H1 (cell line): ENCODE measurements at regions of chr6 and their contacts with region 1.

Region 1: DNA sequence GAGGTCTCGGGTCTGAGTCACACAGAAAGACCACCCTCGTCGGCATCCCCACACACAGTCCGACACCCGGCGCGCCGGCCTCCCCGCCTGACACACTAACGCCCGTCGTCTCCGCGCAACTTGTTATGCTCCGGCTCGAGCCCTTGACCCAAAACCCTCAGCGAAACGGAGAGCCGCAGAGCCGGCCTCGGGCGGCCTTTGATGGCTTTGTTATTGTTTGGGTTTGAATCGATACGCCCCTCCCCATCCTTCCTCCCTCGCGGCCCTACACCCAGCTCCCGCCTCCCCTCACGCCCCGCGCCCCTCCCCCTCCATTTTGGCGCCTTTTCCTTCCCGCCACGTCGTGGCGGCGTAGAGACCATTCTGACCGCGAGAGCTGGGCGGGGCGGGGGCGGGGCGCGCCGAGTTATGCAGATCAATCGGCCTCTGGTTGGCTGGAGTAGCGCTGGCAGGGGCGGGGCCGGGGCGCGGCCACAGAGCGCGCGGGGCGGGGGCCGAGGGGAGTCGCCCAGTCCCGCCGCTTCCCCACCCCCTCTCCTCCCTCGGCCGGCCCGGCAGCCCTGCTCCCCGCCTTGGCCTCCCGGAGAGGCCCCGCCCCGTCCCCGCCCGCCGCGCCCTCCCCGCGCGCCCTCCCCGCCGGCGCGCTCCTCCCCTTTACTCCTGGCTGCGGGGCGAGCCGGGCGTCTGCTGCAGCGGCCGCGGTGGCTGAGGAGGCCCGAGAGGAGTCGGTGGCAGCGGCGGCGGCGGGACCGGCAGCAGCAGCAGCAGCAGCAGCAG is at the start of gene PIM1:
- DNase-seq: peak; percentile 92 to 93
- H3K4me3 ChIP-seq: peak within 1 kb of the TSS; percentile 92 to 99 (median 94)
- H3K27ac ChIP-seq: peak within 1 kb of the TSS; percentile 97
- H3K4me1 ChIP-seq: peaks cover 6 to 14% (median 10%) of the 10 kb centered on the region in 4 experiments; a peak in 5 of 7 replicates
- H3K27me3 ChIP-seq: no peaks in the 10 kb centered on the region
- CTCF ChIP-seq: no peak
- EP300 ChIP-seq: peak in 1 of 2 experiments; percentile 54; a peak in 1 of 3 replicates
- POLR2A ChIP-seq: peak in 1 of 2 experiments; percentile 65
- RAD21 ChIP-seq: no peak
- total RNA-seq, gene PIM1: 94.1 and 94.9 TPM in 2 replicates

Region 2: GRCh38 chr6:35327349-35328027 is 1842.2 kb before region 1 on chr6:
- CTCF ChIA-PET with region 1: no interaction called
- POLR2A ChIA-PET with region 1: no interaction called
- DNase-seq: peak in 1 of 2 experiments; percentile 79
- H3K4me3 ChIP-seq: no peak overlapping the region
- H3K27ac ChIP-seq: no peak overlapping the region
- H3K4me1 ChIP-seq: 0 out of 7 replicates have a peak, but pooled peaks cover 0 to under 1% (median 0%) of the 10 kb centered on the region in 4 experiments
- H3K27me3 ChIP-seq: no peaks in the 10 kb centered on the region
- CTCF ChIP-seq: peak; percentile 51 to 84 (median 74)
- EP300 ChIP-seq: no peak
- POLR2A ChIP-seq: no peak
- RAD21 ChIP-seq: peak; percentile 62 to 76

Region 3: DNA sequence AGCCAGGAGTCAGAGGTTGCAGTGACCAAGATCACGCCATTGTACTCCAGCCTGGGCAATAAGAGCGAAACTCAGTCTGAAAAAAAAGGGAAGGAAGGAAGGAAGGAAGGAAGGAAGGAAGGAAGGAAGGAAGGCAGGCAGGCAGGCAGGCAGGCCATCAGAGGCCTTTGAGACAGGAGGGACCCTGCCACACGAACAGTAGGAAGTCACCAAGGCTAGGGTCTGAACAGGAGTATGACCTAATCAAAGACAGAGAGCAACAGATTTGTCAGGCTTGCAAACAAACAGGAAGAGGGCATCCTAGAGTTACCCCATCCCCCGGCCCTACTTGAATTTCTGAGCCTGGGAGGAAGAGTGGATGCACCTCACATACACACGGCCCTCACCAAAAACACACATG is 97.2 kb before region 1 on chr6:
- CTCF ChIA-PET with region 1: interaction called, 9 read pairs
- POLR2A ChIA-PET with region 1: interaction called, 14 read pairs
- DNase-seq: no peak
- H3K4me3 ChIP-seq: no peak overlapping the region
- H3K27ac ChIP-seq: no peak overlapping the region
- H3K4me1 ChIP-seq: peaks cover 4 to 14% (median 11%) of the 10 kb centered on the region in 4 experiments
- H3K27me3 ChIP-seq: no peaks in the 10 kb centered on the region
- CTCF ChIP-seq: no peak
- EP300 ChIP-seq: no peak
- POLR2A ChIP-seq: no peak
- RAD21 ChIP-seq: no peak; a peak in 1 of 4 replicates

Region 4: DNA sequence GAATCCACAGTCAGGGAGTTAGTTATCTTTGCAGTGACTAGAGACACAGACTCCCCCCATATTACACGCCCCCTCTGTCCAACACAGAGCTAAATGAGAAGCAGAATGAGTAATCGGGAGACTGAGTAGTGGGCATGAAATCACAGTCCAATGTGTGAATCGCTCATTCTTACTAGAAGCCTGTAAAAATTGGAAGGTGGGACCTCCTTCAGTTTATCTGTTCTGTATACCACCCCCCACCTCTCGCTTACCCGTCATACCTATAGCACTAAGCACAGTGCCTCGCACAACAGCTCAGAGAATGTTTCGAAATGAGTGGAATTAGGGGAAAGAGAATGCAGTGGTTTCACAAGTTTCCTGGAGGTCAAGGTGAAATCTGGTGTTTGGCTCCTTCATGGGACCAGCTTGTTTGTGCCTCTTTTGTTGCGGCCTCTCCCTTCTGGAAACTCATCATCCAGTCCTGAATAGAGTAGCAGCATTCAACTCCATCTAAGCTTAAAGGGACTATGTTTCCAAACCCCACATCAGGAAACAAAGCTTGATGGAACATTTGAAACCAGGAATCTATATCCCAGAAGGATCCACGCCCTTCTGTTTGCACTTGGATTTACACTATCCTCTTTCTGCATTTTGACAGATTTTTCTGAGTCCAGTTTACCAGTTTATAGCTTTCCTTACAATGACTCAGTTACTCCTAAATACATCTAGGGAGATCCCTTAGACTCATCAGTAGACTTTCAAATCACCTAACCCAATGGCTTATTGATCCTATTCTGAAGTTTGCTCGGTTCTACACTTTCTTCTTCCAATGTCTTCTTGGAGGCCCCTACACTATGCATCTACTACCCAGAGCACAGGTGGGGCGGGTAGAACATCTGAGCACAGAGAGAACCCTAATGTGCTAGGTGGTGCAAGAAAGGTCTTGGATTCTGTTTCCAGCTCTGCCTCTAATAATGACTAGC is 58.9 kb before region 1 on chr6:
- CTCF ChIA-PET with region 1: interaction called, 12 read pairs
- POLR2A ChIA-PET with region 1: interaction called, 1,024 read pairs
- DNase-seq: no peak
- H3K4me3 ChIP-seq: no peak overlapping the region
- H3K27ac ChIP-seq: no peak overlapping the region
- H3K4me1 ChIP-seq: no peaks in the 10 kb centered on the region; a peak in 3 of 7 replicates
- H3K27me3 ChIP-seq: no peaks in the 10 kb centered on the region
- CTCF ChIP-seq: no peak
- EP300 ChIP-seq: no peak
- POLR2A ChIP-seq: no peak
- RAD21 ChIP-seq: no peak

Region 5: GRCh38 chr6:37131104-37131959 is 38.4 kb before region 1 on chr6:
- CTCF ChIA-PET with region 1: interaction called, 59 read pairs
- POLR2A ChIA-PET with region 1: interaction called, 1,024 read pairs
- DNase-seq: no peak
- H3K4me3 ChIP-seq: no peak overlapping the region
- H3K27ac ChIP-seq: peak overlapping the region; percentile 46; the same call in 1 of the 2 replicates
- H3K4me1 ChIP-seq: peaks cover 22 to 48% (median 34%) of the 10 kb centered on the region in 4 experiments
- H3K27me3 ChIP-seq: no peaks in the 10 kb centered on the region
- CTCF ChIP-seq: no peak
- EP300 ChIP-seq: no peak
- POLR2A ChIP-seq: no peak
- RAD21 ChIP-seq: no peak

Region 6: DNA sequence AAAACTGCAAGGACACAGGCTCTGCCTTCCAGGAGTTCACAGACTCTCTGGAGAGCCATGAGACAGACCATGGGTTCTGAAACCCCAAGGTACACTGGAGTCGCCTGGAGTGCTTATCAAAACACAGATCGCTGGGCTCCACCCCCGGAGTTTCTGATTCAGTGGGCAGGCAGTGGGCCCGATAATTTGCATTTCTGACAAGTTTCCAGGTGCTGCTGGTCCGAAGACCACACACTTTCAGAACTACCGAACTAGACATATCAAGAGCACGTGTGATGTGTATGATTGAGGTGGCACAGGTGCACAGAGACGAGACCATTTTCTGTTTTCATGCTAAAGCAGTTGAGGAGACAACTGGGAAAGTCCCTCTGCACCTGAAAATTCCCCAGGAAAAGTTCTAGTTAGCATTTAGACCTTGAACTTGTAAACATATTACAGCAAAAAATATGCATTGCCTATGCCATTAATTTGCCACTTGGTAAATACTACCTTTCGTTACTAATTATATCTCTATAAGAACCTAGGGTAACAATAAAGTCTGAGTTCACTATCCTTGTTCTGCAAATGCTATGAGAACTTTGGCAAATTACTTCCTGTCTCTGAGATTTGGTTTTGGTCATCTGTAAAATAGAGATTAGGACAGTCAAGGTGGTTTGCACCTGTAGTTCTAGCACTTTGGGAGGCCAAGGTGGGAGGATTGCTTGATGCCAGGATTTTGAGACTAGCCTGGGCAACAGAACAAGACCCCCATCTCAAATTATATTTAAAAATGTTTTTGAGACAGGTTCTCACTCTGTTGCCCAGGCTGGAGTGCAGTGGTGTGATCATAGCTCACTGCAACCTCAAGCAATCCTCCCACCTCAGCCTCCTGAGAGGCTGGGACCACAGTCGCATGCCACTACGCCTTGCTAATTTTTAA is 14.0 kb before region 1 on chr6:
- CTCF ChIA-PET with region 1: interaction called, 5 read pairs
- POLR2A ChIA-PET with region 1: interaction called, 17 read pairs
- DNase-seq: no peak
- H3K4me3 ChIP-seq: no peak overlapping the region
- H3K27ac ChIP-seq: no peak overlapping the region
- H3K4me1 ChIP-seq: peaks cover 0 to 5% (median under 1%) of the 10 kb centered on the region in 4 experiments; a peak in 2 of 7 replicates
- H3K27me3 ChIP-seq: no peaks in the 10 kb centered on the region
- CTCF ChIP-seq: no peak
- EP300 ChIP-seq: no peak
- POLR2A ChIP-seq: no peak
- RAD21 ChIP-seq: no peak

Region 7: DNA sequence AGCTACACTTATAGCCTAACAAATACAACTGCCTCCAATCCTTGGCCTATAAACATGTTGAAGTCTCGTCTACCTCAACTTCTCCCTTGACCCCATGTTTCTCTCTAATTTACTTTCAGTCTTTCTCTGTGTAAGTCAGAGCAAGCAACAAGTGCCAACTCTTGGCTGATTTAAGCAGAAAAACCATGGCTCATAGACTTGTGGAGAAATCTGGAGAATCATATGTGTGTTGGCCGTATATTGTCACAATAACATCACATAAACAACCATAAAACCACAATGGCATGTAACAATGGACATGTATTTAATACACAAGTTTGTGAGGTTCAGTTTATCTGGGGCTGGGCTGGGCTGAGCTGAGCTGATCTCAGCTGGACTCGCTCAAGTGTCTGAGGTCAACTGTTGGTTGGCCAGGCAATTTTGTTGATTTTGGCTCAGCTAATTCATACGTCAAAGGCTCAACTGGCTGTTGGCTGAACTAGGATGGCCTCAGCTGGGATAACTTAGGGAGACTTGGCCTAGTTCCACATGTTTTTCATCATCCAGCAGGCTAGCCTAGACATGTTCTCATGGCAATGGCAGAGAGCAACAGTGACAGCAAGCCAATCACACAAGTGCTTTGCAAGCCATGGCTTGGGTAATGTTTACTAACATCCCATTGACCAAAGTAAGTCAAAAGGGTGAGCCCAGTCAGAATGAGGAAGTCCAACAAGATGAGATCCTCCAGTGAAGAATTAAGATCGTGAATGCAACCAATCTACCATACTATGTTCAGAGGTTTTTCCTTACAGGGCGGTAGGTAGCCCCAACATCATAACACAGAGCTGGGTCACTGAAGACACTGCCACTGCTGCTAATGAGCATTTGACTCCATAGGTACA is 75.0 kb after region 1 on chr6:
- CTCF ChIA-PET with region 1: no interaction called
- POLR2A ChIA-PET with region 1: no interaction called
- DNase-seq: no peak
- H3K4me3 ChIP-seq: no peak overlapping the region
- H3K27ac ChIP-seq: peak overlapping the region; percentile 16; the same call in 1 of the 2 replicates
- H3K4me1 ChIP-seq: no peaks in the 10 kb centered on the region
- H3K27me3 ChIP-seq: no peaks in the 10 kb centered on the region
- CTCF ChIP-seq: no peak
- EP300 ChIP-seq: no peak
- POLR2A ChIP-seq: no peak
- RAD21 ChIP-seq: no peak